ENCODE measurements at regions of chr5 and their contacts with region 1.

Region 1: GRCh38 chr5:141564216-141564692 is 54.5 kb downstream of the DIAPH1 start:
- DNase-seq: no peak
- ATAC-seq: peak; percentile 73

Region 2: GRCh38 chr5:141245250-141245717 is 319.0 kb before region 1 on chr5 and contains the start of gene PCDHB15:
- intact Hi-C with region 1: loop called (anchors 1 kb)
- DNase-seq: no peak
- ATAC-seq: no peak
- total RNA-seq, gene PCDHB15: 5.8 TPM

Region 3: GRCh38 chr5:141338538-141339306 is 225.5 kb before region 1 on chr5 and contains the start of gene PCDHGA2:
- intact Hi-C with region 1: loop called (anchors 5 kb)
- DNase-seq: peak; percentile 66
- ATAC-seq: peak; percentile 70
- total RNA-seq, gene PCDHGA2: 6.2 TPM

Region 4: GRCh38 chr5:141547488-141547887 is 16.8 kb before region 1 on chr5:
- intact Hi-C with region 1: no loop called
- DNase-seq: no peak
- ATAC-seq: no peak

Measured in Right ventricle myocardium inferior (tissue), 1 donor.